ENCODE measurements at regions of chr1 and their contacts with region 1.

Region 1: DNA sequence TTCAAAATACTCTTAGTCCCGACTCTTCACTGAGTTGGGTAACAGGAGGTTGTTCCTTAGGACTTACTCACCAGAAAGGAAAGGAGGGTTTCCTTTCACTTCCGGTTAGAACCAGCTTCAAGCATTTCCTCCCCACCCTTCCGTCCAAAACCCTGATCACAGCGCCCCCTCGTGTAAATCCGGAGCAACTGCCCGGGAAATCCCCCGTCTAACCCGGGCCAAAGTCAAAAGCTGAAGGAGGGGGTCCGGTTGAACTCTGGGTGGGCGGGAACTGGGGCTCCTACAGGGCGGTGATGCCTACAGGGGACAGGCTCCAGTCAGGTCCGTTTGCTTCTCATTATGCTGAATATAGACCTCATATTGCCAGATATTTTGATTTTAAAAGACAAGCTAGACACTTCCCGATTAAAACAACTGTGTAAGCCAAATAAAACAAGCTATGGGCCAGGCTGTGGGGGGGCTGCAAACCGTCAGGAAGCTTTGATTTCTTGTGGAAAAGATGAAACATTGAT is 15.0 kb upstream of the MTARC2 start:
- DNase-seq: peak; percentile 83
- H3K4me3 ChIP-seq: peak overlapping the region in 1 of 3 experiments; percentile 14
- H3K27ac ChIP-seq: peak overlapping the region; percentile 22
- H3K4me1 ChIP-seq: peaks cover 19% of the 10 kb centered on the region
- H3K27me3 ChIP-seq: no peaks in the 10 kb centered on the region
- CTCF ChIP-seq: peak; percentile 75 to 86

Region 2: GRCh38 chr1:220217383-220217988 is 515.7 kb before region 1 on chr1:
- CTCF ChIA-PET with region 1: interaction called, 13 read pairs
- dilution Hi-C with region 1: no loop called
- in situ Hi-C with region 1: no loop called
- intact Hi-C with region 1: loop called (anchors 5 kb)
- DNase-seq: no peak
- H3K4me3 ChIP-seq: no peak overlapping the region
- H3K27ac ChIP-seq: no peak overlapping the region
- H3K4me1 ChIP-seq: peaks cover 6% of the 10 kb centered on the region
- H3K27me3 ChIP-seq: no peaks in the 10 kb centered on the region
- CTCF ChIP-seq: peak; percentile 38 to 59

Region 3: DNA sequence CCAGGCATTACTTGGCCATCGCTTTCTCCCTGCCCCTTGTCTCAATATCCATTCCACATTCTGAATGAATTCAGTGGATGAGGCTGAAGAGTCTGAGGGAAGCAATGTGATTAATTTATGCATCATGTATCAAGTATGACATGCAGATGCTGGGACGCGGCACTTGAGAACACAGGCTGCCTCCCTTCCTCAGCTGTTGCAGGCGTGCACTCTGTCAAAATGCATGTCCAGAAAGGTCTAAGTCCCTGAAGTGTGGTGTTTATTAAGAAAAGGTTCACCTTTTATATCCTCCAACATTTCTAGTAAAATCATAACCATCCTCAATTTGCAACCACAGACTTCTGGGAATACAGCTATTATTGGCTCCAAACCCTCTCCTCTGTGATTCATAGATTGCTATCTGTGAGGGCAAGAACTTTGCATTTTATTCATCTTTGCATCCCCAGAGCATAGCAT is 438.3 kb before region 1 on chr1:
- CTCF ChIA-PET with region 1: interaction called, 15 read pairs
- dilution Hi-C with region 1: no loop called
- in situ Hi-C with region 1: loop called in 1 of 2 experiments (anchors 10 kb)
- intact Hi-C with region 1: loop called (anchors 1 kb)
- DNase-seq: peak; percentile 19
- H3K4me3 ChIP-seq: no peak overlapping the region
- H3K27ac ChIP-seq: no peak overlapping the region
- H3K4me1 ChIP-seq: no peaks in the 10 kb centered on the region
- H3K27me3 ChIP-seq: no peaks in the 10 kb centered on the region
- CTCF ChIP-seq: no peak

Region 4: DNA sequence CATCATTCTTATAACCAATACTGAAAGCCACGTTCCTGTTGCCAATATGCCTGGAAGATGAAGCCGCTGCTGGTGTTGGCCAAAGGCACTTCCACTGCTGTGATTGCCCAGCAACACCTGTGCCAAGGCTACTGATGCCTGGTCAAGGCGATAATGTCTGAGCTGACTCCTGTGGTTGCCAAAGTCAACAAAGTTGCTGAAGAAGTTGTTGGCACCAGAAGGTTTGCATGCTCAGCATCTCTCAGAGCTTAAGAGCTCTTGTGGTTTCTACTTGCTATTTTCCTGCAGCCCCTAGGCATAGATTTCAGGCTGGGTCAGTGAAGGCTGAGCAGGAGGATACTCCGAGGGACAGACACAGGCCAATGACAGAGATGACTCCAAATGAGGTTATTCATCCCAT is 397.5 kb before region 1 on chr1:
- CTCF ChIA-PET with region 1: no interaction called
- dilution Hi-C with region 1: no loop called
- in situ Hi-C with region 1: no loop called
- intact Hi-C with region 1: loop called (anchors 2 kb)
- DNase-seq: peak; percentile 39
- H3K4me3 ChIP-seq: no peak overlapping the region
- H3K27ac ChIP-seq: peak overlapping the region; percentile 53
- H3K4me1 ChIP-seq: peaks cover 26% of the 10 kb centered on the region
- H3K27me3 ChIP-seq: no peaks in the 10 kb centered on the region
- CTCF ChIP-seq: no peak

Region 5: DNA sequence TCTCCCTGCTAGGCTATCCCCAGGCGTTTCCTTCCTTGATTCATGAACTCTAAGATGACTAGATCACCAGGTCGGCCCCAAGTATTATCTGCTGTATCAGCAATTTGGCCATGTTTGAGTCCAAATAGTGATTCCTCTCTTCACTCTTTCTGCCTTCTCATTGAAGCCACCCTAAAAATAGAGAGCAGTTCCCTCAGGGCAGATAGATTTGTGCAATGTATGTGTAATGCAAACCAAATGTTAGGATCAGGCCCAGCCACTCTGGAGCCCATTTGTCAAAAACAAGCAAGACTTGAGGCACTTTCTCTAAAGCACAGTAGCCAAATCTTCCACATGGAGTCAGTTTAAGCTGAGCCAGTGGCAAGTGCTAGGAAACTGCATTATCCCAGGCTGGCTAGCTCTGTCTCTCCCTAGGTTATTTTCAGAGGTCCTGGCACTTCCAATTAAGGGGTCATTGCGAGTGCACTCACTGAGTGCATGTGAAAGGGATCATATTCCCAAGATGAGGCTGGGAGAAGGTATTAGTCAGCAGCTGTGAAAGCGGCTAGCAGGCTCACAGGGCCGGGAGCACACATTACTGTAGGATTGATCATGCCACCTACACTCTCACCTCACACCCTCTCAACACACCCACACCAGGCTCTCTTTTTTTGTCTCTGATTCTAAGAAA is 363.0 kb before region 1 on chr1:
- CTCF ChIA-PET with region 1: no interaction called
- dilution Hi-C with region 1: no loop called
- in situ Hi-C with region 1: no loop called
- intact Hi-C with region 1: no loop called
- DNase-seq: peak; percentile 94
- H3K4me3 ChIP-seq: no peak overlapping the region
- H3K27ac ChIP-seq: peak overlapping the region; percentile 16
- H3K4me1 ChIP-seq: peaks cover 34% of the 10 kb centered on the region
- H3K27me3 ChIP-seq: no peaks in the 10 kb centered on the region
- CTCF ChIP-seq: no peak

Region 6: GRCh38 chr1:220690140-220691025 is 42.8 kb before region 1 on chr1 and contains the start of gene C1orf115:
- CTCF ChIA-PET with region 1: no interaction called
- dilution Hi-C with region 1: no loop called
- in situ Hi-C with region 1: no loop called
- intact Hi-C with region 1: loop called (anchors 1 kb)
- DNase-seq: peak; percentile 70
- H3K4me3 ChIP-seq: peak within 1 kb of the TSS; percentile 40 to 72 (median 62)
- H3K27ac ChIP-seq: no peak within 1 kb of the TSS
- H3K4me1 ChIP-seq: no peaks in the 10 kb centered on the region
- H3K27me3 ChIP-seq: no peaks in the 10 kb centered on the region
- CTCF ChIP-seq: peak; percentile 64 to 98
- total RNA-seq, gene C1orf115: 0.83 to 1.3 TPM

Region 7: DNA sequence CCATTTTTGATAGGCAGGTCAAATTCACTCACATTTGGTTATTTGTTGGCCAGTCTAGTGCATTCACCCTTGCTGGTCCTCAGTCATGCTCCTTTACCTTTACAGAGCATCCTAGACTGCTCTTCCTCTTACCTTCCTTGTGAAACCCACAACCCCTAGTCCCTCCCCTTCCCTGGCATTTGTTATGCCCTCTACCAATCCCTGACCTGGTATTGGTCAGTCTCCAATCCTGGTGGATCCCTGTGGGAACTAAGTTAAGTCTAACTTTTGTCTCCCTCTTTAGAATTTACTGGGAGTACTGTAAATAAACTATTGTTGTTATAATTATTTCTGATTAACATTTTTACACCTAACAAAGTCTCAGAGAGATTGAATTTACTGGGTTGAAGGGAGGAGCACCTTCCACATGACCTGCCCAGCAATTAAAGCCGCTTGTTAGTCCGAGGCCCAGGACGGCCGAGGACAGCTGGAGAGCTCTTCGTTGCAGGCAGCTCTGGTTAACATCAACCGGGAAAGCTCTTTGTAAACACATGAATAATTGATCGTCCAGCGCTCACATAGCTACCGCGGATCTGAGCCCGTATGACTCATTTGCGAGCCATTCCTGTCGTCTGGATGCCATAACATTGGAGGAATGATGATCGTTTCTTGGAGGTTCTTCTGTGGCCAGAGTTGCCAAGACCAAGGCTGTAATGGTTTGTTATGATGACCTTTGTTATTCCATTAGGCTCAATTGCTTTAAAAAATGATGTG is 85.5 kb after region 1 on chr1:
- CTCF ChIA-PET with region 1: no interaction called
- dilution Hi-C with region 1: no loop called
- in situ Hi-C with region 1: no loop called
- intact Hi-C with region 1: no loop called
- DNase-seq: no peak
- H3K4me3 ChIP-seq: no peak overlapping the region
- H3K27ac ChIP-seq: no peak overlapping the region
- H3K4me1 ChIP-seq: no peaks in the 10 kb centered on the region
- H3K27me3 ChIP-seq: no peaks in the 10 kb centered on the region
- CTCF ChIP-seq: no peak